ENCODE measurements at regions of chr2 and their contacts with region 1.

Region 1: DNA sequence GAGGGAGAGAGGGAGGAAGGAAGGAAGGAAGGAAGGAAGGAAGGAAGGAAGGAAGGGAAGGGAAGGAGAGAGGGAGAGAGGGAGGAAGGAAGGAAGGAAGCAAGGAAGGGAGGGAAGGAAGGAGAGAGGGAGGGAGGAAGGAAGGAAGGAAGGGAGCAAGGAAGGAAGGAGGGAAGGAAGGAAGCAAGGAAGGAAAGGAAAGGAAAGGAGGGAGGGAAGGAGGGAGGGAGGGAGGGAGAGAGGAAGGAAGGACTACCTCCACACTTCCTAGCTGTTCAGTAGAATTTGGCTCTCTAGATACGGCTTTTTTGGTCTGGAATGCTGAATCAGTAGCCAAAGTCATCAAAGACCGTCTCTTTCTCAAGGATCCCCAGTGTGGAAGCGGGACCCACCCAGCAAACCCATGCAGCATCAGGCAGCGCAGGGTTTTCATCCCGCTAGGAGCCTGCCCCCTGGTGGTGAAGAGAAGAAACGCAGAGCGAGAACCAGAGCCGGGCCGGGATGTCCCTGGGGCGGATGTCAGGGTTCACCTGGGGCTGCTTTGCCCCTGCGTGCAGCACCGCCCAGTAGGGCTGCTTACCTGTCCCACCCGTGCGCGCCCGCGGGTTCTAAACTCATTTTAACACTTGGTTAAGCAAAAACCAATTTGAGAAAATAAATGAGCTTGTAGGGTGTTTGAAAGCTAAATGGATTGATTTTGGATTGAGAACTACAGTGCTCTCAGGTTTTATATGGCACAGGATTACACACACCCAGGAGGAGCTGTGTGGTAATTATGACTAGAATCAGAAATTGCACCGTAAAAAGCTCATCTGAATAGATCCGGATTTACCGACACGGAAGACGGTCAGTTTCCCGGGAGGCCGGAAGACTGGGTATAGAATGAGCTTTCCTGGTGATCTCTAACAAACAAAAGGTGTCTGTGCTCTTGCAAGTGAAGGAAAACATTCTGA is 48.1 kb upstream of the ARL4C start:
- DNase-seq: no peak
- H3K4me3 ChIP-seq: no peak overlapping the region
- H3K27ac ChIP-seq: no peak overlapping the region
- H3K4me1 ChIP-seq: peaks cover 0 to 7% (median 0%) of the 10 kb centered on the region in 3 donors
- H3K27me3 ChIP-seq: peaks cover 0 to 43% (median 0%) of the 10 kb centered on the region in 4 donors
- CTCF ChIP-seq: peak; percentile 68 to 98 (median 86)
- POLR2A ChIP-seq: no peak

Region 2: GRCh38 chr2:233976690-233977294 is 568.1 kb before region 1 on chr2:
- intact Hi-C with region 1: loop called (anchors 10 kb)
- DNase-seq: no peak
- H3K4me3 ChIP-seq: no peak overlapping the region
- H3K27ac ChIP-seq: no peak overlapping the region
- H3K4me1 ChIP-seq: peaks cover 5 to 41% (median 6%) of the 10 kb centered on the region in 3 donors
- H3K27me3 ChIP-seq: peaks cover 0 to 59% (median 0%) of the 10 kb centered on the region in 4 donors
- CTCF ChIP-seq: peak in 5 of 6 experiments; percentile 29 to 52 (median 44)
- POLR2A ChIP-seq: no peak

Region 3: DNA sequence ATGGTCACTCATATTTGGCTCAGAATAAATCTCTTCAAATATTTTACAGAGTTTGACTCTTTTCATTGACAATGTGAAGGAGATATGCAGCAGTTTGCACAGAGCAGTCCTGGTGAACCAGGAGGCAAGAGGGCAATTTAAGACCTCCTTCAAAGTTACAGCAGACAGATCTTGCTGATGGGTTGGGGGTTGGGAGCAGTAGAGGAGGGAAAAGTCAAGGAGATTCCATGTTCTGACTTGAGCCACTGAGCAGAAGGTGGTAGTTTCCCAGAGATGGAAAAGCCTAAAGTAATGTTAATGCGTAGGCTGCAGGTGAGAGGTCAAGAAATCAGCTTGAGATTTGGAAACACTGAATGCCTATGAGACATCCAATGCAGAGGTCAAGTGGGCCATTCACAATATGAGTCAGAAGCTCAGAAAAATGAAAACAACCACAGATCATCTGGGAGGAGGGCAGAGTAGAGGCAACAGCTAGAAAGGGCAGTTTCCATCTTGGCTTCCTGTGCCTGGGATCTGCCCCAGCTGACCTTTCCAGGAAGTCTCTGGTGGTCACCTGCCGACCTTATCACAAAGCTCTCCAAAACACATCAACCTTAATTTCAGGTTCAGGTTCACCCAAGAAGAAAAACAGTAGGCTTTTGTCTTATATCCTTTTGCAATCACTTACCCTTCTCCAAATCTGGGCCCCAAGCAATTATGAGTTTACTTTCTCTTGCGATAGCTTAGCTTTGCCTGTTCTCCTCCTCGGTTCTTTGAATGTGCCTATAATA is 149.5 kb after region 1 on chr2:
- intact Hi-C with region 1: no loop called
- DNase-seq: no peak
- H3K4me3 ChIP-seq: no peak overlapping the region
- H3K27ac ChIP-seq: no peak overlapping the region
- H3K4me1 ChIP-seq: peaks cover 8 to 34% (median 16%) of the 10 kb centered on the region in 3 donors
- H3K27me3 ChIP-seq: peaks cover 0 to 66% (median 0%) of the 10 kb centered on the region in 4 donors
- CTCF ChIP-seq: no peak
- POLR2A ChIP-seq: no peak

Measured in esophagus squamous epithelium (tissue), 5 donors.